HepG2 (cell line): ENCODE measurements at regions of chr19 and their contacts with region 1.

Region 1: GRCh38 chr19:32224371-32225244 is 120.8 kb upstream of the ZNF507 start:
- DNase-seq: peak; percentile 21
- ATAC-seq: peak; percentile 94
- H3K4me3 ChIP-seq: no peak overlapping the region
- H3K27ac ChIP-seq: no peak overlapping the region
- H3K4me1 ChIP-seq: no peaks in the 10 kb centered on the region
- H3K27me3 ChIP-seq: peaks cover 0 to 26% of the 10 kb centered on the region in 2 experiments; a peak in 3 of 5 replicates
- CTCF ChIP-seq: peak; percentile 88
- EP300 ChIP-seq: no peak
- POLR2A ChIP-seq: no peak
- RAD21 ChIP-seq: peak; percentile 94

Region 2: GRCh38 chr19:30669329-30670010 is 1555.1 kb before region 1 on chr19:
- CTCF ChIA-PET with region 1: no interaction called
- POLR2A ChIA-PET with region 1: no interaction called
- in situ Hi-C with region 1: loop called (anchors 5 kb)
- intact Hi-C with region 1: no loop called
- DNase-seq: peak; percentile 30
- ATAC-seq: peak; percentile 63
- H3K4me3 ChIP-seq: no peak overlapping the region
- H3K27ac ChIP-seq: no peak overlapping the region
- H3K4me1 ChIP-seq: peaks cover 15% of the 10 kb centered on the region
- H3K27me3 ChIP-seq: peaks cover 0 to 3% of the 10 kb centered on the region in 2 experiments; a peak in 1 of 5 replicates
- CTCF ChIP-seq: peak; percentile 80
- EP300 ChIP-seq: no peak
- POLR2A ChIP-seq: no peak
- RAD21 ChIP-seq: peak; percentile 31; the same call in 1 of the 2 replicates

Region 3: GRCh38 chr19:30682999-30683536 is 1541.5 kb before region 1 on chr19:
- CTCF ChIA-PET with region 1: interaction called, 17 read pairs
- POLR2A ChIA-PET with region 1: no interaction called
- in situ Hi-C with region 1: no loop called
- intact Hi-C with region 1: no loop called
- DNase-seq: peak; percentile 35
- ATAC-seq: peak; percentile 74
- H3K4me3 ChIP-seq: no peak overlapping the region
- H3K27ac ChIP-seq: no peak overlapping the region
- H3K4me1 ChIP-seq: no peaks in the 10 kb centered on the region
- H3K27me3 ChIP-seq: peaks cover 0 to 26% of the 10 kb centered on the region in 2 experiments; a peak in 3 of 5 replicates
- CTCF ChIP-seq: peak; percentile 84
- EP300 ChIP-seq: no peak
- POLR2A ChIP-seq: no peak
- RAD21 ChIP-seq: peak; percentile 60

Region 4: GRCh38 chr19:30784850-30785457 is 1439.7 kb before region 1 on chr19:
- CTCF ChIA-PET with region 1: interaction called, 5 read pairs
- POLR2A ChIA-PET with region 1: no interaction called
- in situ Hi-C with region 1: no loop called
- intact Hi-C with region 1: loop called (anchors 10 kb)
- DNase-seq: peak; percentile 16
- ATAC-seq: peak; percentile 62
- H3K4me3 ChIP-seq: no peak overlapping the region
- H3K27ac ChIP-seq: no peak overlapping the region
- H3K4me1 ChIP-seq: no peaks in the 10 kb centered on the region
- H3K27me3 ChIP-seq: no peaks in the 10 kb centered on the region
- CTCF ChIP-seq: peak; percentile 80
- EP300 ChIP-seq: no peak
- POLR2A ChIP-seq: no peak
- RAD21 ChIP-seq: peak; percentile 52

Region 5: GRCh38 chr19:31676271-31677004 is 548.2 kb before region 1 on chr19:
- CTCF ChIA-PET with region 1: no interaction called
- POLR2A ChIA-PET with region 1: no interaction called
- in situ Hi-C with region 1: no loop called
- intact Hi-C with region 1: loop called (anchors 10 kb)
- DNase-seq: no peak
- ATAC-seq: no peak
- H3K4me3 ChIP-seq: no peak overlapping the region
- H3K27ac ChIP-seq: no peak overlapping the region
- H3K4me1 ChIP-seq: no peaks in the 10 kb centered on the region
- H3K27me3 ChIP-seq: no peaks in the 10 kb centered on the region
- CTCF ChIP-seq: peak; percentile 52
- EP300 ChIP-seq: no peak
- POLR2A ChIP-seq: no peak
- RAD21 ChIP-seq: no peak